ENCODE measurements at regions of chr10 and their contacts with region 1.

Region 1: DNA sequence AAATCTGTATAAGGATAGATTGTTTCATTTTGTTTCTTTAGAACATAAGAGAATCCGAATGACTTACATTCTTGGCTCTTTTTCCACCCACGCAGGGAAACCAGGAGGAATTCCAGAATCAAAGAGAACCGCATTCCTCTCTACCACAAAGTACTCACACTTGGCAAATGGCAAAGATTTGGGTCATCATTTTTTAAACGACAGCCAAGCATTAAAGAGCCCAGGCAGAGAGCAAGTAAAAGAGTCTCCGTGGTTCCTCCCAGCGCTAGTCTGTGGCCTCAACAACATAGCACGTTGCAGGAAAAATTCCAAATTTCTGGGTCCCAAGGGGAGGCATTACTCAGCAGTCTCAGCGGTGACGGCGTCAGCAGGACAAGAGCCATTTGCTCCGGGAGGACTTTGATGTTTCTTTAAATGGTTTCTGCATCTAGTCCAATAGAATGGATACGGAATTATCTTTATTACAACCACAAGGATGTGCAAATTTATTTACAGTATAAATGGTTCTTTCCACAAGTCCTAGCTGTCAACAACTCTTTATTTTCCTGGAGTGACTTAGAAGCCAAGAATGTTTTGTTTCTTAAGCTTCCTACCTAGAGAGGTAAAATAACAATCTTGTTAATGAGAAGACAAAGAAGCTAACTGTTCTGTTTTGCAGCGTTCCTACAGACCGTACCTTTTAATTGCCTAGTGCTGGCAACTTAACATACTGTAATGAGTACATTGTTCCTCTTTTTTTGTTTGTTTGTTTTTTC is 232.5 kb downstream of the SKIDA1 start:
- DNase-seq: peak; percentile 77 to 87
- H3K4me3 ChIP-seq: peak overlapping the region; percentile 51; the same call in 1 of the 2 replicates
- H3K27ac ChIP-seq: peak overlapping the region; percentile 85
- H3K4me1 ChIP-seq: peaks cover 32% of the 10 kb centered on the region
- H3K27me3 ChIP-seq: no peaks in the 10 kb centered on the region
- CTCF ChIP-seq: no peak

Region 2: DNA sequence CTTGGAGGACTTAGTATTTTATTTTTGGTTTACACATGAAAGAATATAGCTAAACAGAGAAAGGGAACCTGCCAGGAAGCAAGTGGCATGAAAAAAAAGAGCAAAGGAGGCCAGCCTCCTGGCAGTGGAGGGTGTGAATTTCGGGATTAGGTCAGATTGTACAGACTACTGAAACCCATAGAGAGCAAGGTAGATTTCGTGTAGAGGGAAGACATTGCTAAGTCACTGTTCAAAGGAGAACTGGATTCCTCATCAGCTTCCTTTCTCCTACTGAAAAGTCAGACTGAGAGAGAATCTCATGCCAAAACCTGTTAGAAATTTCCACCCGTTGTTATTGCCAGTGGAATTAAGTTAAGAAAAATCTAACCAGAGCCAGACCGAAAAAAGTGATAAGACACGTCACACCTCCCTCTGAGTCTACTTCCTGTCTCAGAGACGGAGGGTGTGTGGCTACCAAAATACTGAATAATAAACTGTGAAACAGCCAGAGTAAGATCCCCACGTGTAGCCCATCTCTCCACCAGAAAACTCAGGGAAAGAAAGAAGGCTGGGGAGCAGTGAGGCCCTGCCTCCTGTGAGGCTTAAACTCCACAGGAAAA is 113.8 kb after region 1 on chr10:
- CTCF ChIA-PET with region 1: interaction called, 12 read pairs
- POLR2A ChIA-PET with region 1: no interaction called
- intact Hi-C with region 1: no loop called
- DNase-seq: no peak
- H3K4me3 ChIP-seq: no peak overlapping the region
- H3K27ac ChIP-seq: no peak overlapping the region
- H3K4me1 ChIP-seq: no peaks in the 10 kb centered on the region
- H3K27me3 ChIP-seq: no peaks in the 10 kb centered on the region
- CTCF ChIP-seq: no peak

Measured in PC-9 (cell line).